ENCODE measurements at regions of chr18 and their contacts with region 1.

Region 1: GRCh38 chr18:741931-742512 is 29.6 kb upstream of the ENOSF1 start:
- DNase-seq: no peak
- H3K4me3 ChIP-seq: no peak overlapping the region
- H3K27ac ChIP-seq: no peak overlapping the region
- H3K4me1 ChIP-seq: no peaks in the 10 kb centered on the region
- H3K27me3 ChIP-seq: no peaks in the 10 kb centered on the region
- CTCF ChIP-seq: peak; percentile 70 to 82 (median 79)
- EP300 ChIP-seq: no peak
- POLR2A ChIP-seq: no peak

Region 2: DNA sequence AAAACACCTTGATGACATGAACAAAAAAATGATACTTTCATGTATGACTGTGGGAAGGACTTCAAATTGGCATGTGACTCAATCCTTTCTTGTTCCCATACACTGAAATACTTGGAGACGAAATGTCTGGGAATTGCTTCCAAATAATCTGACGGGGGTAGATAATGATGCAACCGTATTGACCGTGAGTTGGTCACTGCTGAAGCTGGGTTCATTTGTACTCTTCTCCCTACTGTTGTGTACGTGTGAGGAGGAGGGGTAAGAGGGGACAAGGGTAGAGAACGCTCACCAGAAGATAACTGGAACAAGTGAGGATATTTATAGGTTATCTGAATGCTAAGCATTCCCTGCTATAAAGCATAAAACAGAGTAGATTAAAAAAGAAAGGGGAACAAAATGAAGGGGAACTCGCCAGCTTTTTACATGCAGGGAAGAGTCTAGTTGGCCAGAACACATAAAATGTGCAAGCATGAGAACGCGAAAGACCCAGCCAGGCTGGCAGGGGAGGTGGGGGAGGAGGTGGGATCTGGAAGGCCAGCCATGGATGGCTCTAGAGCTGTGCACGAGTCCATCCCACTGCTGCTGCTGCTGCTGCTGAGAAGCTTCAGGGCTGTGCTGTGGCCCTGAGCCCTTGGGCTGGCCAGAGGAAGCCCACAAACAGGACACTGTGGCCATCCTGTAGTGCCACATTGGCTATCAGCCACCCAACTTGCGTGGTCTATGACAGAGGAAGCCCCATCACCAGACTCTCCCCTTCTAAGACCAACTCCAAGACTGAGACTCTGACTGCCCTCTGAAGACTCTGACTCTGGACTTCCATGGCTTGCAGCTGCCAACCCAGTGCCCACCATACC is 177.1 kb before region 1 on chr18:
- in situ Hi-C with region 1: no loop called
- intact Hi-C with region 1: no loop called
- DNase-seq: no peak
- H3K4me3 ChIP-seq: no peak overlapping the region
- H3K27ac ChIP-seq: no peak overlapping the region
- H3K4me1 ChIP-seq: no peaks in the 10 kb centered on the region
- H3K27me3 ChIP-seq: no peaks in the 10 kb centered on the region
- CTCF ChIP-seq: no peak
- EP300 ChIP-seq: no peak
- POLR2A ChIP-seq: no peak

Region 3: GRCh38 chr18:830315-830901 is 88.4 kb after region 1 on chr18:
- in situ Hi-C with region 1: loop called (anchors 5 to 10 kb)
- intact Hi-C with region 1: loop called (anchors 5 kb)
- DNase-seq: no peak
- H3K4me3 ChIP-seq: no peak overlapping the region
- H3K27ac ChIP-seq: no peak overlapping the region
- H3K4me1 ChIP-seq: peaks cover 0 to 7% (median 1%) of the 10 kb centered on the region in 4 donors
- H3K27me3 ChIP-seq: no peaks in the 10 kb centered on the region
- CTCF ChIP-seq: no peak
- EP300 ChIP-seq: no peak
- POLR2A ChIP-seq: no peak

Region 4: GRCh38 chr18:839224-840022 is 97.4 kb after region 1 on chr18:
- in situ Hi-C with region 1: loop called (anchors 5 to 10 kb)
- intact Hi-C with region 1: loop called (anchors 5 kb)
- DNase-seq: peak; percentile 89
- H3K4me3 ChIP-seq: no peak overlapping the region
- H3K27ac ChIP-seq: no peak overlapping the region
- H3K4me1 ChIP-seq: peaks cover 0 to 3% (median 0%) of the 10 kb centered on the region in 4 donors
- H3K27me3 ChIP-seq: no peaks in the 10 kb centered on the region
- CTCF ChIP-seq: peak; percentile 86 to 99 (median 98)
- EP300 ChIP-seq: no peak
- POLR2A ChIP-seq: no peak

Measured in transverse colon (tissue), 4 donors.